HEK293 (cell line): ENCODE measurements at regions of chr22 and their contacts with region 1.

Region 1: GRCh38 chr22:41022470-41023298 is 69.7 kb upstream of the EP300 start:
- H3K4me3 ChIP-seq: peak overlapping the region; percentile 68
- H3K27ac ChIP-seq: peak overlapping the region; percentile 89
- H3K4me1 ChIP-seq: peaks cover 5% of the 10 kb centered on the region
- CTCF ChIP-seq: no peak; the same call in 1 of the 2 replicates

Region 2: GRCh38 chr22:40862537-40862936 is 160.1 kb before region 1 on chr22:
- CTCF ChIA-PET with region 1: no interaction called
- POLR2A ChIA-PET with region 1: no interaction called
- H3K4me3 ChIP-seq: no peak overlapping the region
- H3K27ac ChIP-seq: no peak overlapping the region
- H3K4me1 ChIP-seq: 0 out of 2 replicates have a peak, but pooled peaks cover 6% of the 10 kb centered on the region
- CTCF ChIP-seq: no peak

Region 3: DNA sequence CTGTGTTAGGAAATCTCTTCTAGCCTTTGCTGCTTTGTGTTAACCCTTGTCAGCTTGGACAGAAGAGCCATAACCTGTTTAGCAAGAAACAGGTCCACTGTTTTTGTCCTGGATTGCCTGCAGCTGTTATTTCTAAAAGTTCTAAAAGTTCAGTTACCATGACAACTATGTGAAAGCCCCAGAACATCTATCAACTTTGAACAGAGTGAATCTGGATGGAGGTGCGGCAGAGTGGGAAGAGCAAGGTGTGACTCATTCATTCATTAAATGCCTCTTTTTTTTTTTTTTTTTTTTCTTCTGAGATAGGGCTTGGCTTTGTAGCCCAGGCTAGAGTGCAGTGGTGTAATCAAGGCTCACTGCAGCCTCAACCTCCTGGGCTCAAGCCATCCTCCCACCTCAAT is 21.0 kb before region 1 on chr22:
- CTCF ChIA-PET with region 1: no interaction called
- POLR2A ChIA-PET with region 1: interaction called, 20 read pairs
- H3K4me3 ChIP-seq: no peak overlapping the region
- H3K27ac ChIP-seq: no peak overlapping the region
- H3K4me1 ChIP-seq: no peaks in the 10 kb centered on the region
- CTCF ChIP-seq: no peak

Region 4: GRCh38 chr22:41009202-41009943 is 13.3 kb before region 1 on chr22:
- CTCF ChIA-PET with region 1: interaction called, 4 read pairs
- POLR2A ChIA-PET with region 1: interaction called, 10 read pairs
- H3K4me3 ChIP-seq: no peak overlapping the region
- H3K27ac ChIP-seq: no peak overlapping the region
- H3K4me1 ChIP-seq: no peaks in the 10 kb centered on the region
- CTCF ChIP-seq: no peak

Region 5: GRCh38 chr22:41048791-41049717 is 26.4 kb after region 1 on chr22:
- CTCF ChIA-PET with region 1: no interaction called
- POLR2A ChIA-PET with region 1: interaction called, 12 read pairs
- H3K4me3 ChIP-seq: no peak overlapping the region
- H3K27ac ChIP-seq: no peak overlapping the region
- H3K4me1 ChIP-seq: peaks cover 5% of the 10 kb centered on the region; the same call in 1 of the 2 replicates
- CTCF ChIP-seq: no peak

Region 6: DNA sequence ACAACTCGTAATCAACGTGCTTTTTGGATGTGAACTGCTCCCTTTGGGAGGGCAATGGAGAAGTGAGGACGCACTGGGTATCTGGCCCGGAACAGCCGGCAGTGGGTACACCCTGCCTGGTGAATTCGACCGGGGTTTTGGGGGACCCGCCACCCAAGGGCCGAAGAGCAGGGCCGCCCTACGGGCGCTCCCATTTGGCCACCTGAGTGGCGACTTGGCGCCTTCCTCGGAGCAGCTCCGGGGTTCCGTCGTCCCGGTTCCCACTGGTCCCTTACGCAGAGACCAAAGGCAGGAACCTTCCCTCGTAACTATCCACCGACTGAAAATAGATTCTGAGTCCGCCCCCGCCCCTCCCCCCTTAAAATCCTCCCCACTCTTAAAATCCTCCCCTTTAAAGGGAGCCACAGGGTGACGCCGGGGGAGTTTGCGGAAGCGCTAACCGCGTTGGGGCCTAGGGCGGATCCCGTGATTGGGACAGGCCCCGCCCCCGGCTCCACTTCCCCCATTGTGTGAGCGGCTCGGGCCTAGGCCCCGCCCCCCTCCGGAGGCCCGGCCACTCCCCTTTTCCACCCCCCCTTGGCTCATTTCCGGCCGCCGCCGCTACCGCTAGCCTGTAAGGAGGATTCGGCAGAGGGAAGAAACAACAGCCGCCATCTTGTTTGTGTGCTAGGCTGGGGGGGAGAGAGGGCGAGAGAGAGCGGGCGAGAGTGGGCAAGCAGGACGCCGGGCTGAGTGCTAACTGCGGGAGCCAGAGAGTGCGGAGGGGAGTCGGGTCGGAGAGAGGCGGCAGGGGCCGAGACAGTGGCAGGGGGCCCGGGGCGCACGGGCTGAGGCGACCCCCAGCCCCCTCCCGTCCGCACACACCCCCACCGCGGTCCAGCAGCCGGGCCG is 68.7 kb after region 1 on chr22:
- CTCF ChIA-PET with region 1: no interaction called
- POLR2A ChIA-PET with region 1: interaction called, 19 read pairs
- H3K4me3 ChIP-seq: peak overlapping the region; percentile 98
- H3K27ac ChIP-seq: peak overlapping the region; percentile 100
- H3K4me1 ChIP-seq: peaks cover 3% of the 10 kb centered on the region
- CTCF ChIP-seq: peak; percentile 37

Region 7: DNA sequence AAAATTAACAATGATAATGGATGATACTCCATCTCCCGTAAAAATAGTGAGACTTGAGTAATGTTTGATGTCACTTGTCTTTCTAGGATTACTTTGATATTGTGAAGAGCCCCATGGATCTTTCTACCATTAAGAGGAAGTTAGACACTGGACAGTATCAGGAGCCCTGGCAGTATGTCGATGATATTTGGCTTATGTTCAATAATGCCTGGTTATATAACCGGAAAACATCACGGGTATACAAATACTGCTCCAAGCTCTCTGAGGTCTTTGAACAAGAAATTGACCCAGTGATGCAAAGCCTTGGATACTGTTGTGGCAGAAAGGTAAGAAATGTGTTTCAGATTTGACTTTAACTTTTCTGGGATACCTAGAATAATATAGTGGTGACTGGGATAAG is 134.4 kb after region 1 on chr22:
- CTCF ChIA-PET with region 1: no interaction called
- POLR2A ChIA-PET with region 1: no interaction called
- H3K4me3 ChIP-seq: no peak overlapping the region
- H3K27ac ChIP-seq: no peak overlapping the region
- H3K4me1 ChIP-seq: no peaks in the 10 kb centered on the region
- CTCF ChIP-seq: no peak